B cell (primary cell): ENCODE measurements at regions of chr5 and their contacts with region 1.

Region 1: DNA sequence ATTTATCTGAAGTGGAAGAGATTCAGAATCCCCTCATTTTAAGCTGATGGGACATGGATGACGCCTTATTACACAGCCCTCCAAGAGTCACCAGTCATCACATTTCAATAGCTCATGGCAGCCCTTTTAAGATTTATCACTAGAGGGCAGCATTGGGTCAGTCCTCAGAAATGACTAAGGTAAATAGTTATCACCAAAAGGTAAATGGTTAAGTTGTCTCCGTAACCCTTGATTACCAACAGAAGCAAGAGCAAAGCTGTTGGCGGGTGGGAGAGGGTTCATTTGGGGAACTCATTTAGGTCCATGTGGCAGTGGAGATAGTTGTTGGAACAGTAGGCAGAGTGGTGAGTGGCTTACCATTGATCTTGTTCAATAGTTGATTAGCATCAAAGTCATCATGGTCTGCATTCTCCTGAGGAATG is 12.0 kb upstream of the C9 start:
- DNase-seq: peak; percentile 58
- ATAC-seq: peak; percentile 31
- H3K4me3 ChIP-seq: no peak overlapping the region
- H3K4me3 Mint-ChIP-seq: no peak overlapping the region
- H3K27ac ChIP-seq: no peak overlapping the region
- H3K27ac Mint-ChIP-seq: no peak overlapping the region
- H3K4me1 ChIP-seq: no peaks in the 10 kb centered on the region
- H3K4me1 Mint-ChIP-seq: no peaks in the 10 kb centered on the region
- H3K27me3 ChIP-seq: no peaks in the 10 kb centered on the region
- H3K27me3 Mint-ChIP-seq: peaks cover 3% of the 10 kb centered on the region
- CTCF ChIP-seq: peak; percentile 78

Region 2: GRCh38 chr5:39547553-39548154 is 171.3 kb after region 1 on chr5:
- CTCF ChIA-PET with region 1: interaction called, 119 read pairs
- POLR2A ChIA-PET with region 1: no interaction called
- intact Hi-C with region 1: no loop called
- DNase-seq: peak; percentile 47
- ATAC-seq: no peak
- H3K4me3 ChIP-seq: no peak overlapping the region
- H3K4me3 Mint-ChIP-seq: no peak overlapping the region
- H3K27ac ChIP-seq: no peak overlapping the region
- H3K27ac Mint-ChIP-seq: no peak overlapping the region
- H3K4me1 ChIP-seq: peaks cover 2 to 3% of the 10 kb centered on the region in 2 donors
- H3K4me1 Mint-ChIP-seq: peaks cover 1% of the 10 kb centered on the region
- H3K27me3 ChIP-seq: peaks cover 0 to 8% (median under 1%) of the 10 kb centered on the region in 4 experiments
- H3K27me3 Mint-ChIP-seq: peaks cover 19% of the 10 kb centered on the region
- CTCF ChIP-seq: peak; percentile 74

Region 3: GRCh38 chr5:39570403-39571027 is 194.2 kb after region 1 on chr5:
- CTCF ChIA-PET with region 1: interaction called, 14 read pairs
- POLR2A ChIA-PET with region 1: no interaction called
- intact Hi-C with region 1: no loop called
- DNase-seq: peak; percentile 31
- ATAC-seq: no peak
- H3K4me3 ChIP-seq: no peak overlapping the region
- H3K4me3 Mint-ChIP-seq: no peak overlapping the region
- H3K27ac ChIP-seq: no peak overlapping the region
- H3K27ac Mint-ChIP-seq: no peak overlapping the region
- H3K4me1 ChIP-seq: no peaks in the 10 kb centered on the region
- H3K4me1 Mint-ChIP-seq: no peaks in the 10 kb centered on the region
- H3K27me3 ChIP-seq: peaks cover 0 to 5% (median 2%) of the 10 kb centered on the region in 4 experiments
- H3K27me3 Mint-ChIP-seq: peaks cover 7% of the 10 kb centered on the region
- CTCF ChIP-seq: peak; percentile 74